Aorta (tissue), 5 donors: ENCODE measurements at regions of chr18 and their contacts with region 1.

Region 1: GRCh38 chr18:74353169-74353775 is 37.6 kb downstream of the C18orf63 start:
- DNase-seq: peak in 1 of 2 donors; percentile 70
- ATAC-seq: peak; percentile 91
- H3K4me3 ChIP-seq: no peak overlapping the region
- H3K27ac ChIP-seq: no peak overlapping the region
- H3K4me1 ChIP-seq: no peaks in the 10 kb centered on the region
- H3K27me3 ChIP-seq: no peaks in the 10 kb centered on the region

Region 2: DNA sequence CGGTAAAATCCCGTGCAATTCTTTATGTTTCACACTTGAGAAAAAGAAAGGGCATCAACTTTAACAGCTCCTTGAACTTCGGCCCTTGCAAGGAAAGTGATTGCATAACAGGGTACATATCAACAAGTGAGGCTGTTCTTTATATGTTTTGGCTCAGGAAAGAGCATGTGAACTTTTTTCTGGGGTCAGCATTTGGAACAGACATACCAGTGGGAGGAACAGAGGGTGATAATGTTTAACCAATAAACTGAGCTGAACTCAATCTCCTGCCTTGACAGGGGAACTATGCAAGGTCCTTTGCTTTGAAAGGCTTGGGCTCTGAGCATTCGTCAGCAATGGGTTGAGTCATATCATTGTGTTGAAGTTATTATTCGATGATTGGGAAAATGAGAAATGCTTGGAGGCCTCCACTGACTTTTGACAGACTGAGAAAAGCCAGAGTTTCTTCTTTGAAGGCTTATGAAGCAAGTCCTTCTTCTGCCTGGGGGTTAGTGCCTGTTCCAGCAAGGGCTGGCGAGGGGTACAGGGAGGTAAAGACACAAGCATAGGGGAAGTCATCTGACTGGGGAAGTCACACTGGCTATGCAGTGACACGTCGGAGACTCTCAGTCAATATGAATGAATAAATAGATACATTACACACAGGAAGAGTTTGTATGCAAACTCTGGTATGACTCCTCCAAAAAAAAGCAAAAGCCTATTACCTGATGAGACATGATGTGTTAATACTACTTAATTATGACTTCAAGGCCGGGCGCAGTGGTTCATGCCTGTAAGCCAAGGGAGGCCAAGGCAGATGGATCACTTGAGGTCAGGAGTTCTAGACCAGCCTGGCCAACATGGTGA is 118.7 kb before region 1 on chr18:
- intact Hi-C with region 1: no loop called
- DNase-seq: no peak
- ATAC-seq: peak; percentile 87
- H3K4me3 ChIP-seq: no peak overlapping the region
- H3K27ac ChIP-seq: no peak overlapping the region
- H3K4me1 ChIP-seq: no peaks in the 10 kb centered on the region
- H3K27me3 ChIP-seq: no peaks in the 10 kb centered on the region

Region 3: DNA sequence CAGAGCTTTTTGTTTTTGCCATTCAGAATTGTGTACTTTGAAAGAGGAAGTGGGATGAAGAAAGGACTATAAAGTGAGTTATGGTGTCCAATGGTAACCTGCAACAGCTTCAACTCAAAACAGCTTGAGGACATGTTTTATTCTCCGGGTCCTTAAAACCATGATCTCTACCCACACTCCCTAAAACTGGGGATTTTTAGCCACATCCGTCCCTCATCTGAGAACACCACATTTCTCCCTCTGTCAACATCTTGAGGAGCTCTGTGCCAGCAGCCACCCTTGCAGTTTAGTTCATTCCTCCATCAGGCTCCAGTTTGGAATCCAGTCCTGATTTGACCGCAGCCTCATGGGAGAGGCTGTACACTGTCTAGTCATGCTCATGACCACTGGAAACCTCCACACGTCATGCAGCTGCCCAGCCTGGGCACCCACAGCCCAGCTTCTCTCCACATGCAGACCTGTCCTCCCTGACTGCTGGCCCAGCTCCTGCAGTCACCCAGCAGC is 25.0 kb after region 1 on chr18:
- intact Hi-C with region 1: loop called in 1 of 2 experiments (anchors 2 kb)
- DNase-seq: peak; percentile 81 to 83
- ATAC-seq: peak; percentile 88
- H3K4me3 ChIP-seq: no peak overlapping the region
- H3K27ac ChIP-seq: peak overlapping the region in 1 of 2 donors; percentile 37
- H3K4me1 ChIP-seq: peaks cover 0 to 3% of the 10 kb centered on the region in 2 donors
- H3K27me3 ChIP-seq: no peaks in the 10 kb centered on the region

Region 4: GRCh38 chr18:74476140-74476539 is 122.9 kb after region 1 on chr18:
- intact Hi-C with region 1: loop called (anchors 5 kb)
- DNase-seq: no peak
- ATAC-seq: no peak
- H3K4me3 ChIP-seq: no peak overlapping the region
- H3K27ac ChIP-seq: no peak overlapping the region
- H3K4me1 ChIP-seq: no peaks in the 10 kb centered on the region
- H3K27me3 ChIP-seq: no peaks in the 10 kb centered on the region

Region 5: GRCh38 chr18:74551936-74552555 is 198.8 kb after region 1 on chr18:
- intact Hi-C with region 1: loop called (anchors 5 kb)
- DNase-seq: peak; percentile 85 to 88
- ATAC-seq: peak; percentile 92
- H3K4me3 ChIP-seq: no peak overlapping the region
- H3K27ac ChIP-seq: no peak overlapping the region
- H3K4me1 ChIP-seq: no peaks in the 10 kb centered on the region
- H3K27me3 ChIP-seq: no peaks in the 10 kb centered on the region